Activated CD4-positive, alpha-beta T cell treated with anti-CD3 and anti-CD28 coated beads for 36 hours (primary cell): ENCODE measurements at regions of chr11 and their contacts with region 1.

Region 1: GRCh38 chr11:3665336-3666022 is 5.7 kb downstream of the CHRNA10 start:
- DNase-seq: no peak
- ATAC-seq: no peak
- H3K4me3 Mint-ChIP-seq: no peak overlapping the region
- H3K27ac Mint-ChIP-seq: no peak overlapping the region
- H3K4me1 Mint-ChIP-seq: no peaks in the 10 kb centered on the region
- H3K27me3 Mint-ChIP-seq: no peaks in the 10 kb centered on the region

Region 2: GRCh38 chr11:3631331-3631730 is 34.1 kb before region 1 on chr11:
- CTCF ChIA-PET with region 1: no interaction called
- POLR2A ChIA-PET with region 1: no interaction called
- intact Hi-C with region 1: loop called in 1 of 2 experiments (anchors 1 kb)
- DNase-seq: no peak
- ATAC-seq: peak; percentile 77
- H3K4me3 Mint-ChIP-seq: no peak overlapping the region
- H3K27ac Mint-ChIP-seq: no peak overlapping the region
- H3K4me1 Mint-ChIP-seq: peaks cover 5% of the 10 kb centered on the region
- H3K27me3 Mint-ChIP-seq: no peaks in the 10 kb centered on the region